ENCODE measurements at regions of chr15 and their contacts with region 1.

Region 1: DNA sequence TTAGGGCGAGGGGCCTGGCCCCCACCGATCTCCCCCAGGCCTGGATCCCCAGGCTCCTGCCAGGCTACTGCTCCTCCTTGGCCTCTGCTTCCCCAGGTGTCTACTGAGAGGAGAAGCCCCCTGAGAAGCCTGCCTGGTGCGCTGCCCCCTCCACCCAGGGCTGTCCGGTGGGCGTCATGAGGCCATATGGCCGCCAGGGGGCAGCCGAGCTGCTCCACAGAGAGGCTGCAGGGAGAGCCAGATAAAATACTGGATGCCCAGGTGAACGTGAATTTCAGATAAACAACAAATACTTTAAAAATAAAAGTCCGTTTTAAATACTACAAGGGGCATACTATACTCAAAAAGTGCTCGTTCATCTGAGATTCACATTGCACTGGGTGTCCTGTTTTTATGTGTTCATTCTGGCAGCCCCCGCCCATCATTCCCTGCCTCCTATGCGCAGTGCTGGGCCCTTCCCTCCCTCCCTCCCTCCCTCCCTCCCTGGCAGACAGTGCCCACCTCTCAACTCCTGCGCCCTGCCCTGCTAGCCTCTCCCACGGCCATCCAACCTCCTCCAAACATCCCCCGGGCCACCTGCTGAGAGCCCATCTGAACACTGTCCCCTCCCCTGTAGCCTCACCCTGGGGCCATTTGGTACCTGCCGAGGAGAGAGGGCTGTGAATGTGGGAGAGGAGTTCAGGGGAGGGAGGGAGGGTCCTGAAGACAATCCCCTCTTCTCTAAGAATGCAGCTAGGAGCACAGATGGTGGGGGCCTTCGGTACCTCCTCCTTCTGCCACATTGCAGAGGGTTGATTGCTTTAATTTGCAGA is 29.6 kb downstream of the PSTPIP1 start:
- DNase-seq: peak; percentile 74
- ATAC-seq: peak; percentile 37
- H3K4me3 Mint-ChIP-seq: no peak overlapping the region
- H3K27ac Mint-ChIP-seq: peak overlapping the region; percentile 99
- H3K4me1 Mint-ChIP-seq: peaks cover 82% of the 10 kb centered on the region
- H3K27me3 Mint-ChIP-seq: no peaks in the 10 kb centered on the region

Region 2: GRCh38 chr15:76979331-76979925 is 45.0 kb before region 1 on chr15:
- CTCF ChIA-PET with region 1: interaction called, 159 read pairs
- POLR2A ChIA-PET with region 1: interaction called, 3 read pairs
- DNase-seq: no peak
- ATAC-seq: no peak
- H3K4me3 Mint-ChIP-seq: no peak overlapping the region
- H3K27ac Mint-ChIP-seq: no peak overlapping the region
- H3K4me1 Mint-ChIP-seq: peaks cover 44% of the 10 kb centered on the region
- H3K27me3 Mint-ChIP-seq: no peaks in the 10 kb centered on the region

Region 3: GRCh38 chr15:76987926-76988860 is 36.3 kb before region 1 on chr15:
- CTCF ChIA-PET with region 1: interaction called, 75 read pairs
- POLR2A ChIA-PET with region 1: interaction called, 125 read pairs
- DNase-seq: peak; percentile 74
- ATAC-seq: peak; percentile 72
- H3K4me3 Mint-ChIP-seq: peak overlapping the region; percentile 60
- H3K27ac Mint-ChIP-seq: peak overlapping the region; percentile 94
- H3K4me1 Mint-ChIP-seq: peaks cover 66% of the 10 kb centered on the region
- H3K27me3 Mint-ChIP-seq: no peaks in the 10 kb centered on the region

Region 4: GRCh38 chr15:76994971-76995945 is 29.2 kb before region 1 on chr15 and contains the start of gene PSTPIP1:
- CTCF ChIA-PET with region 1: interaction called, 75 read pairs
- POLR2A ChIA-PET with region 1: interaction called, 125 read pairs
- DNase-seq: peak; percentile 85
- ATAC-seq: peak; percentile 81
- H3K4me3 Mint-ChIP-seq: peak within 1 kb of the TSS; percentile 96
- H3K27ac Mint-ChIP-seq: peak within 1 kb of the TSS; percentile 96
- H3K4me1 Mint-ChIP-seq: peaks cover 72% of the 10 kb centered on the region
- H3K27me3 Mint-ChIP-seq: no peaks in the 10 kb centered on the region
- total RNA-seq, gene PSTPIP1: 208 to 212 TPM

Region 5: DNA sequence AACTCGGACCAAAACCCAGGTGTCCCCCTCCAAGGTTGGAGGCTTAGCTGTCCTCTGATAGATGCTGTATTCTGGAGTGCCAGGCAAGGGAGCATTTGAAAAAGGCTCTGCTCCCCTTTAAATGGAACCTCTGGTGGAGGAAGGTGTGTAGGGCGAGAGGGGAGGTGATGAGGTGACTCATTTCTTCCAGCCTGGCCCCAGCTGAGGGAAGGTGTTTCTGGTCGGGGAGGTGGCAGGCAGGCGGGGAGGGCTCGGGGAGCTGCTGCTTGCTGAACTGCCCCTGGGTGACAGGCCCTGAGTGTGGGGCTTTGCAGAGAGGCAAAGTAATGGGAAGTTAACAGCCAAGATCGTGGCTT is 10.7 kb before region 1 on chr15:
- CTCF ChIA-PET with region 1: interaction called, 28 read pairs
- POLR2A ChIA-PET with region 1: interaction called, 13 read pairs
- DNase-seq: peak; percentile 96
- ATAC-seq: peak; percentile 80
- H3K4me3 Mint-ChIP-seq: peak overlapping the region; percentile 72
- H3K27ac Mint-ChIP-seq: peak overlapping the region; percentile 99
- H3K4me1 Mint-ChIP-seq: peaks cover 99% of the 10 kb centered on the region
- H3K27me3 Mint-ChIP-seq: no peaks in the 10 kb centered on the region

Region 6: GRCh38 chr15:77059786-77060361 is 35.4 kb after region 1 on chr15:
- CTCF ChIA-PET with region 1: interaction called, 14 read pairs
- POLR2A ChIA-PET with region 1: no interaction called
- DNase-seq: no peak
- ATAC-seq: no peak
- H3K4me3 Mint-ChIP-seq: no peak overlapping the region
- H3K27ac Mint-ChIP-seq: peak overlapping the region; percentile 35
- H3K4me1 Mint-ChIP-seq: peaks cover 14% of the 10 kb centered on the region
- H3K27me3 Mint-ChIP-seq: no peaks in the 10 kb centered on the region

Measured in activated CD8-positive, alpha-beta T cell treated with anti-CD3 and anti-CD28 coated beads, Interleukin-2, amount 10 ng/mL, durations not matched to agents 7 days and 5 days (primary cell).